HCT116 (cell line): ENCODE measurements at regions of chr1 and their contacts with region 1.

Region 1: DNA sequence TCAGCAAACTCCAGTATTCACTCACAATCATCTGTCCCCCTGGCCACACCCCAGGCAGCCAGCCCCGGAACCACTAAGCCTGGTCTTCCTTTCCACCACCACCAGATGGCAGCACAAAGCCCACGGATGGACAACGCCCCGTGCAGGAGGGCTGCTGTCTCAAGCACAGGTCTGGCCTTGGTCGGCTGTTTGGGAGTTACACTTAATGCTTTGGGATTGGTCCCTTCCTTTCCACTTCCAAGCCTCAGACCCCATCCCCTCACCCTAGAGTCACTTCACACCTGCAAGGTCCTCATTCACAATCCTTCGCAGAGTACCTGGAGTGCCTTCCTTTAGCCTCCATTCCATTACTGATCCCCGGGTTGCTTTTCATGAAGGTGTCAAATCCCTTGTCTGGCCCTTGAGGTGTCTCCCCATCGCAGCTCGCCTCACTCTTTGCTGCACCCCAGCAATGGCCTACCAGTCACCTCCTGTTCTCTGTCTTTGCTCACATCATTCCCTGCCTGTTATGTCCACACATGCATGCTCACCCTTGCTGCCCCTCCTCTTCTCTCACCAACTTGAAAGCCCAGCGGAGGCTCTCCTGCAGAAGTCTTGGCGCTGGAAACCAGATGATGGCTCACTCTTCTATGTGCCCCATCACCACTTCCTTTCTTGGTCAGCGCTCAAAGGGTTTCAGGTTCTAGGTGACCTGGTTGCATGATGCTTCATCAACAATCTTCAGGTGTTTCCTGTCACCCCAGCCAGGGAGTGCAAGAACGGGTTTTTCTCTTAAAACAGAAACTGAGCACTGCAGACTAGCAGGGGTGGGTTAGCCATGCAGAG is 24.9 kb upstream of the KCNA2 start:
- DNase-seq: peak; percentile 43
- ATAC-seq: peak; percentile 100
- H3K4me3 ChIP-seq: no peak overlapping the region
- H3K27ac ChIP-seq: no peak overlapping the region
- H3K4me1 ChIP-seq: 0 out of 4 replicates have a peak, but pooled peaks cover 0 to 3% of the 10 kb centered on the region in 2 experiments
- H3K27me3 ChIP-seq: peaks cover 24% of the 10 kb centered on the region
- CTCF ChIP-seq: peak; percentile 82 to 88 (median 85)
- POLR2A ChIP-seq: no peak
- RAD21 ChIP-seq: peak; percentile 67

Region 2: GRCh38 chr1:110686188-110686587 is 55.1 kb after region 1 on chr1:
- CTCF ChIA-PET with region 1: no interaction called
- POLR2A ChIA-PET with region 1: no interaction called
- RAD21 ChIA-PET with region 1: no interaction called
- intact Hi-C with region 1: loop called (anchors 5 kb)
- DNase-seq: no peak
- ATAC-seq: peak; percentile 69
- H3K4me3 ChIP-seq: no peak overlapping the region
- H3K27ac ChIP-seq: no peak overlapping the region
- H3K4me1 ChIP-seq: no peaks in the 10 kb centered on the region
- H3K27me3 ChIP-seq: peaks cover 74% of the 10 kb centered on the region
- CTCF ChIP-seq: peak in 2 of 3 experiments; percentile 20 to 33; a peak in 3 of 6 replicates
- POLR2A ChIP-seq: no peak
- RAD21 ChIP-seq: no peak

Region 3: DNA sequence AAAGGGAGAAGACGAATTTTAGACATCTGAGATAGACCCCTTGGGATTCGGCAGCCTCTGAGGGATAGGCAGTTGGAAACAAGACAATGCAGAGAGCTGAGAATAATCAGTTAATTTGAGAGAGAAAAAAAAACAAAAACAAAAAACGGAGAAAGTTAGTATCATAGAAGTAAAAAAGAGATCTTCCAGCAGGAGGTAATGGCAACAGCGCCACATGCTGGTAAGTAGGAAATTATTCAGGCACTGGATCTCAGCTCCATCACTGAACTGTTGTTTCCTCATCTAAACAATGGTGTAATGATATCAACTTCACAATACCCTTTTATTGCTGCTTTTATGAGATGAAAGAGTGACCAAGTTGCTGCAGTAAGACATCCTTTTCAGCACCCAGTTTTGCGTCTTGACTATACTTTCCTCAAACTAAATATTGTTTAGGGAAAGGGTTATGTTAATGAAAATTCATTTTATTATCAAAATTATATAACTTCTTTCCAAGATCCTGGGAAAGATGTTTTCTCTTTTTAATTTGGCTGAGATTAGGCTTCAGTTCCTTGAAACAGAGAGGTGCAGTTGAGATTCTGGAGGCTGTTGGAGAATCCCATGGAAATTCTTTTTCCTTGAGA is 135.1 kb after region 1 on chr1:
- CTCF ChIA-PET with region 1: interaction called, 4 read pairs
- POLR2A ChIA-PET with region 1: no interaction called
- RAD21 ChIA-PET with region 1: no interaction called
- intact Hi-C with region 1: loop called (anchors 1 kb)
- DNase-seq: peak; percentile 10
- ATAC-seq: peak; percentile 68; the same call in 1 of the 2 replicates
- H3K4me3 ChIP-seq: no peak overlapping the region
- H3K27ac ChIP-seq: no peak overlapping the region
- H3K4me1 ChIP-seq: no peaks in the 10 kb centered on the region
- H3K27me3 ChIP-seq: peaks cover 67% of the 10 kb centered on the region
- CTCF ChIP-seq: peak; percentile 61 to 82 (median 75); a peak in 5 of 6 replicates
- POLR2A ChIP-seq: no peak
- RAD21 ChIP-seq: peak; percentile 73

Region 4: GRCh38 chr1:110963691-110964399 is 332.8 kb after region 1 on chr1 and contains the start of gene LRIF1:
- CTCF ChIA-PET with region 1: no interaction called
- POLR2A ChIA-PET with region 1: no interaction called
- RAD21 ChIA-PET with region 1: no interaction called
- intact Hi-C with region 1: no loop called
- DNase-seq: peak; percentile 95
- ATAC-seq: peak; percentile 99
- H3K4me3 ChIP-seq: peak within 1 kb of the TSS; percentile 65 to 66
- H3K27ac ChIP-seq: peak within 1 kb of the TSS; percentile 91
- H3K4me1 ChIP-seq: peaks cover 3 to 6% of the 10 kb centered on the region in 2 experiments; a peak in 2 of 4 replicates
- H3K27me3 ChIP-seq: no peaks in the 10 kb centered on the region
- CTCF ChIP-seq: peak in 1 of 3 experiments; percentile 22; a peak in 1 of 6 replicates
- POLR2A ChIP-seq: peak; percentile 95
- RAD21 ChIP-seq: no peak; the same call in 1 of the 2 replicates
- total RNA-seq, gene LRIF1: 21.8 TPM

Region 5: GRCh38 chr1:110990536-110990935 is 359.5 kb after region 1 on chr1:
- CTCF ChIA-PET with region 1: no interaction called
- POLR2A ChIA-PET with region 1: no interaction called
- RAD21 ChIA-PET with region 1: no interaction called
- intact Hi-C with region 1: loop called (anchors 5 kb)
- DNase-seq: no peak
- ATAC-seq: no peak
- H3K4me3 ChIP-seq: no peak overlapping the region
- H3K27ac ChIP-seq: no peak overlapping the region
- H3K4me1 ChIP-seq: no peaks in the 10 kb centered on the region
- H3K27me3 ChIP-seq: peaks cover 23% of the 10 kb centered on the region
- CTCF ChIP-seq: no peak
- POLR2A ChIP-seq: no peak
- RAD21 ChIP-seq: no peak